Natural killer cell (primary cell): ENCODE measurements at regions of chr2 and their contacts with region 1.

Region 1: GRCh38 chr2:10408649-10409579 is 39.2 kb downstream of the ODC1 start:
- DNase-seq: peak; percentile 71 to 93
- ATAC-seq: peak; percentile 76 to 91 (median 86)
- H3K4me3 ChIP-seq: no peak overlapping the region
- H3K4me3 Mint-ChIP-seq: peak overlapping the region; percentile 95
- H3K27ac ChIP-seq: peak overlapping the region; percentile 58
- H3K27ac Mint-ChIP-seq: peak overlapping the region; percentile 90 to 91
- H3K4me1 ChIP-seq: peaks cover 47% of the 10 kb centered on the region
- H3K4me1 Mint-ChIP-seq: peaks cover 35 to 37% of the 10 kb centered on the region in 2 donors
- H3K27me3 ChIP-seq: no peaks in the 10 kb centered on the region
- H3K27me3 Mint-ChIP-seq: no peaks in the 10 kb centered on the region
- CTCF ChIP-seq: peak; percentile 95

Region 2: GRCh38 chr2:10122386-10123280 is 286.3 kb before region 1 on chr2 and contains the start of gene RRM2:
- intact Hi-C with region 1: loop called (anchors 1 kb)
- DNase-seq: peak; percentile 86 to 93
- ATAC-seq: peak; percentile 73 to 87 (median 78)
- H3K4me3 ChIP-seq: peak within 1 kb of the TSS; percentile 44
- H3K4me3 Mint-ChIP-seq: peak within 1 kb of the TSS; percentile 97
- H3K27ac ChIP-seq: no peak within 1 kb of the TSS
- H3K27ac Mint-ChIP-seq: peak within 1 kb of the TSS; percentile 89 to 92
- H3K4me1 ChIP-seq: peaks cover 55% of the 10 kb centered on the region
- H3K4me1 Mint-ChIP-seq: peaks cover 50 to 54% of the 10 kb centered on the region in 2 donors
- H3K27me3 ChIP-seq: peaks cover 3% of the 10 kb centered on the region
- H3K27me3 Mint-ChIP-seq: no peaks in the 10 kb centered on the region
- CTCF ChIP-seq: no peak
- total RNA-seq, gene RRM2: 16.1 to 22.1 (median 18.5) TPM

Region 3: DNA sequence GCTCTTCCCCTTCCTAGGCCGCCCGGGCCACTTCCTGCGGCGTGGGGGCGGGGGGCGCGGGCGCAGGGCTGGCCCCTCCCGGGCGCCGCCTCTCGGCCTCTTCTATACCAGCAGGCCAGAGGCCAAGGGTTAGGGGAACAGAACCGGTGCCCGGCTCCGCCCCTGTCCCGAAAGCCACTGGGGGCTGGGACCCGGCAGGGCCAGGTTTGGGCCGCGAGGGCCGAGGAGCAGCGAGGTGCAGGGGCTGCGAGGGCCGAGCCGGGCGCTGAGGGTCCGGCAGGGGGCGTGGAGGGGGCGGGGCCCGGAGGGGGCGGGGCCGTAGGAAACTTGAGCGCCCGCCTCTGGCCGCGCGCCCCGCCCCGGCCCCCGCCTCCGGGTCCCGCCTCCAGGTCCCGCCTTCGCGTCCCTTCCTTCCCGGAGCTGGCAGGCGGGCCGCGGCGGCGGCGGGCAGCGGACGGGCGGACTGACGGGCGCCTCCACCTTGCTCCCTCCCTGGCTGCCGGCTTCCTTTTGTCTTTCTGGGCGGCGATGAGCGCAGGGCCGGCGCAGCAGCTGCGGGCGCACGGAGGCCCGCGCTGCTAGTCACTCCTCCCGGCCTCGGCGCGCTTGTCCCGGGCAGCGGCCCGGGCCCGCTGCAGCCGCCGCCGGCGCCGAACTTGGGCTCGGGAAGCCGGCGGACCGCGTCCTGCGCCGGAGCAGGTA is 106.3 kb before region 1 on chr2 and contains the start of gene HPCAL1:
- intact Hi-C with region 1: loop called (anchors 2 kb)
- DNase-seq: peak; percentile 84 to 87
- ATAC-seq: peak; percentile 82 to 91 (median 82)
- H3K4me3 ChIP-seq: peak within 1 kb of the TSS; percentile 82
- H3K4me3 Mint-ChIP-seq: peak within 1 kb of the TSS; percentile 95
- H3K27ac ChIP-seq: peak within 1 kb of the TSS; percentile 69
- H3K27ac Mint-ChIP-seq: peak within 1 kb of the TSS in 1 of 2 donors; percentile 82
- H3K4me1 ChIP-seq: peaks cover 55% of the 10 kb centered on the region
- H3K4me1 Mint-ChIP-seq: peaks cover 62 to 68% of the 10 kb centered on the region in 2 donors
- H3K27me3 ChIP-seq: no peaks in the 10 kb centered on the region
- H3K27me3 Mint-ChIP-seq: no peaks in the 10 kb centered on the region
- CTCF ChIP-seq: peak; percentile 74
- total RNA-seq, gene HPCAL1: 31.1 to 45.2 (median 39.8) TPM

Region 4: GRCh38 chr2:10331027-10331701 is 77.8 kb before region 1 on chr2:
- intact Hi-C with region 1: loop called (anchors 2 kb)
- DNase-seq: peak; percentile 42 to 83
- ATAC-seq: peak; percentile 69 to 71 (median 69)
- H3K4me3 ChIP-seq: peak overlapping the region; percentile 46
- H3K4me3 Mint-ChIP-seq: peak overlapping the region; percentile 93
- H3K27ac ChIP-seq: peak overlapping the region; percentile 48
- H3K27ac Mint-ChIP-seq: peak overlapping the region; percentile 82 to 87
- H3K4me1 ChIP-seq: peaks cover 54% of the 10 kb centered on the region
- H3K4me1 Mint-ChIP-seq: peaks cover 63 to 66% of the 10 kb centered on the region in 2 donors
- H3K27me3 ChIP-seq: no peaks in the 10 kb centered on the region
- H3K27me3 Mint-ChIP-seq: no peaks in the 10 kb centered on the region
- CTCF ChIP-seq: no peak

Region 5: DNA sequence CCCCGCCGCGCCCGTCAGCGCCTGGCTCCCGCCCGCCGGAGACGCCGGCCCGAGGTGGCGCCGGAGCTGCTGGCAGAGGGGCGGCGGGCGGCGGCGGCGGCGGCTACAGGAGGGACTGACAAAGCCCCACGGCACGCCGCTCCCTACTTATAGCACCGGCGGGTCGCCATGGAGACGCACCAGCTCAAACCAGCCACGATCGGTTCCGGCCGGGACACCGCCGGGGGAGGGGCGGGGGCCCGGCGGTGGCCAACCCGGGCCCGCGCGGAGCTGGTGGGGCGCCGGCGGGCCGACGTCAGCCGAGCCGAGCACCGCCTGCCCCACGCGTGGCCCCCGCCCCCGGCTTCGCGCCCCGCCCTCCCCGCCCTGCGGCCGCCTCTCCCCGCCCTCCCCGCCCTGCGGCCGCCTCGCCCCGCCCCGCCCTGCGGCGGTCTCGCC is 39.3 kb after region 1 on chr2 and contains the start of gene ODC1:
- intact Hi-C with region 1: loop called (anchors 2 kb)
- DNase-seq: peak; percentile 95 to 97
- ATAC-seq: peak; percentile 80 to 93 (median 82)
- H3K4me3 ChIP-seq: peak within 1 kb of the TSS; percentile 58
- H3K4me3 Mint-ChIP-seq: peak within 1 kb of the TSS; percentile 75
- H3K27ac ChIP-seq: peak within 1 kb of the TSS; percentile 93
- H3K27ac Mint-ChIP-seq: peak within 1 kb of the TSS; percentile 68 to 85
- H3K4me1 ChIP-seq: peaks cover 22% of the 10 kb centered on the region
- H3K4me1 Mint-ChIP-seq: peaks cover 6 to 20% of the 10 kb centered on the region in 2 donors
- H3K27me3 ChIP-seq: no peaks in the 10 kb centered on the region
- H3K27me3 Mint-ChIP-seq: no peaks in the 10 kb centered on the region
- CTCF ChIP-seq: no peak
- total RNA-seq, gene ODC1: 38.7 to 85.4 (median 43.8) TPM